Activated CD4-positive, alpha-beta memory T cell treated with anti-CD3 and anti-CD28 coated beads for 36 hours (primary cell): ENCODE measurements at regions of chr16 and their contacts with region 1.

Region 1: DNA sequence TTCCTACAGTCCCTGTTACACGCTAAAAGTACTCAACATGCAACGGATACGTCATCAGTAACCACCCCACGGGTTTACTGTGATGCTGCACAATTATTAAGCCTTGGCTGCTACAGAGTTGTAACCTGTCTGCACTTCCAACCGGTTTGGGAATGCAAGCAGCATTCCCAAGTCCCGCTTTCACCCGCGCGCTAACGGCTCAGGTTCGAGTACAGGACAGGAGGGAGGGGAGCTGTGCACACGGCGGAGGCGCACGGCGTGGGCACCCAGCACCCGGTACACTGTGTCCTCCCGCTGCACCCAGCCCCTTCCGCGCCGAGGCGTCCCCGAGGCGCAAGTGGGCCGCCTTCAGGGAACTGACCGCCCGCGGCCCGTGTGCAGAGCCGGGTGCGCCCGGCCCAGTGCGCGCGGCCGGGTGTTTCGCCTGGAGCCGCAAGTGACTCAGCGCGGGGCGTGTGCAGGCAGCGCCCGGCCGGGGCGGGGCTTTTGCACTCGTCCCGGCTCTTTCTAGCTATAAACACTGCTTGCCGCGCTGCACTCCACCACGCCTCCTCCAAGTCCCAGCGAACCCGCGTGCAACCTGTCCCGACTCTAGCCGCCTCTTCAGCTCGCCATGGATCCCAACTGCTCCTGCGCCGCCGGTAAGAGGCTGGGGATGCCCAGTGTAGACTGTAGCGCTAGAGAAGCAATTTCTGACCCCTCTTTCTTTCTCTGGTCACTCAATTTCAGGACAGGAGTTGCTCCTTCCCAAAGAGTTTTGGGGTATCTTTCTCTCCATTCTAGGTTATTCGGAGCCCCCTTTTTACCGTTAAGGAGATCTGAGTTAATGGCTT is at the start of gene MT2A:
- DNase-seq: peak; percentile 95
- H3K4me3 Mint-ChIP-seq: peak within 1 kb of the TSS; percentile 81
- H3K27ac Mint-ChIP-seq: peak within 1 kb of the TSS; percentile 79
- H3K4me1 Mint-ChIP-seq: peaks cover 57% of the 10 kb centered on the region
- H3K27me3 Mint-ChIP-seq: no peaks in the 10 kb centered on the region
- total RNA-seq, gene MT2A: 102 to 105 TPM

Region 2: DNA sequence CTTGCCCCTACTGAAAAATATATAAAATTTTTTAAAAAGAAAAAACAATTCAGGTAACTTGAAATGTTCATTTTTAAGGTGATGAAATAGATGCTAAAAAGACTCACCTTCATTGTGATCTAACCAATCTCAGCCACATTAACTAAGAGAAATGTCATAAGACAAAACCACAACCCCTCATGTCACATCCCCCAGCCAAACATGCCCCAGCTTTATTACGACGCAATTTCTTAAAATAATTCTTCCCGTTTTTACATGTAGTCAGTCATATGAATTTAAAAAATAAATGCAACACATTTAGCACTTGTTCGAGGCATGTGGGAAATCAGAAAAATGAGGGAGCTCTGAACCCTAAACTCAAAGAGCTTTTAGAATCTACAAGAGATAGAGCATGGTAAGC is 192.4 kb before region 1 on chr16:
- CTCF ChIA-PET with region 1: no interaction called
- POLR2A ChIA-PET with region 1: no interaction called
- intact Hi-C with region 1: no loop called
- DNase-seq: no peak
- H3K4me3 Mint-ChIP-seq: no peak overlapping the region
- H3K27ac Mint-ChIP-seq: no peak overlapping the region
- H3K4me1 Mint-ChIP-seq: peaks cover 19% of the 10 kb centered on the region
- H3K27me3 Mint-ChIP-seq: no peaks in the 10 kb centered on the region

Region 3: GRCh38 chr16:56450986-56451752 is 157.1 kb before region 1 on chr16 and contains the starts of genes NUDT21 and OGFOD1:
- CTCF ChIA-PET with region 1: interaction called, 3 read pairs
- POLR2A ChIA-PET with region 1: interaction called, 3 read pairs
- intact Hi-C with region 1: loop called (anchors 5 kb)
- DNase-seq: peak; percentile 95
- H3K4me3 Mint-ChIP-seq: peak within 1 kb of the TSS; percentile 95
- H3K27ac Mint-ChIP-seq: peak within 1 kb of the TSS; percentile 89
- H3K4me1 Mint-ChIP-seq: peaks cover 56% of the 10 kb centered on the region
- H3K27me3 Mint-ChIP-seq: no peaks in the 10 kb centered on the region
- total RNA-seq, gene NUDT21: 352 to 361 TPM
- total RNA-seq, gene OGFOD1: 63.0 to 66.4 TPM

Region 4: GRCh38 chr16:56625140-56625942 is 17.1 kb after region 1 on chr16 and contains the start of gene MT1E:
- CTCF ChIA-PET with region 1: interaction called, 5 read pairs
- POLR2A ChIA-PET with region 1: interaction called, 6 read pairs
- intact Hi-C with region 1: loop called (anchors 1 kb)
- DNase-seq: peak; percentile 62
- H3K4me3 Mint-ChIP-seq: peak within 1 kb of the TSS; percentile 78
- H3K27ac Mint-ChIP-seq: no peak within 1 kb of the TSS
- H3K4me1 Mint-ChIP-seq: peaks cover 12% of the 10 kb centered on the region
- H3K27me3 Mint-ChIP-seq: peaks cover 21% of the 10 kb centered on the region
- total RNA-seq, gene MT1E: 4.4 to 4.8 TPM

Region 5: DNA sequence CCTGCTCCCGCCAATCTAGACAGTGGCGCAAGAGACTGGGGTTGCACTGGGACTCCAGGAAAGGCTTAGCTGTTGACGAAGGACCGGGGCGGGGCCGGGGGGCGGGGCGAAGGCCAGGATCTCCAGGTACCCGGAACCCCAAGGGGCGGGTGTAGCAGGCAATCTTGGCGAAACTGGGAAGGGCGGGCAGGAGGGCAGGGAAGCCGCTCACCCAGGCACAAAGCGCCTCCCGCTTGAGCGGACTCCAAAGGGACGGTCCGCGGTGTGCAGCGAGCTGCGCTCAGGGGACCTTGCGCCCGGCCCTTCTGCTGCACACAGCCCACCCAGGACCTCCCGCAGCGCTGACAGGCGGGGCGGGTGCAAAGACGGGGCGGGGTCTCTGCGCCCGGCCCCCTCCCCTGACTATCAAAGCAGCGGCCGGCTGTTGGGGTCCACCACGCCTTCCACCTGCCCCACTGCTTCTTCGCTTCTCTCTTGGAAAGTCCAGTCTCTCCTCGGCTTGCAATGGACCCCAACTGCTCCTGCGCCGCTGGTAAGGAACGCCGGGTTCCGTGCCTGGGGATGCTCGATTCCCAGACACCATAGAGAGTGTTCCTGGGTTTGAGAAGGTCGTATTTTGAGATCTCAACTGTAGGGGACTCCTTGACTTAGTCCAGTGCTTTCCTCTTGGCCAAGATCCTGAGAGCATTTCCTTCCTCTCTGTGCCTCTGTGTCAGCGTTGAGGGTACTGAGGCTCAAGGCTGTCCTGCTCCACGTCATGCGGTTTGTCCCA is 49.5 kb after region 1 on chr16 and contains the start of gene MT1F:
- CTCF ChIA-PET with region 1: interaction called, 3 read pairs
- POLR2A ChIA-PET with region 1: interaction called, 3 read pairs
- intact Hi-C with region 1: loop called (anchors 1 kb)
- DNase-seq: peak; percentile 84
- H3K4me3 Mint-ChIP-seq: peak within 1 kb of the TSS; percentile 94
- H3K27ac Mint-ChIP-seq: peak within 1 kb of the TSS; percentile 69
- H3K4me1 Mint-ChIP-seq: peaks cover 14% of the 10 kb centered on the region
- H3K27me3 Mint-ChIP-seq: peaks cover 4% of the 10 kb centered on the region
- total RNA-seq, gene MT1F: 8.5 to 9.2 TPM

Region 6: DNA sequence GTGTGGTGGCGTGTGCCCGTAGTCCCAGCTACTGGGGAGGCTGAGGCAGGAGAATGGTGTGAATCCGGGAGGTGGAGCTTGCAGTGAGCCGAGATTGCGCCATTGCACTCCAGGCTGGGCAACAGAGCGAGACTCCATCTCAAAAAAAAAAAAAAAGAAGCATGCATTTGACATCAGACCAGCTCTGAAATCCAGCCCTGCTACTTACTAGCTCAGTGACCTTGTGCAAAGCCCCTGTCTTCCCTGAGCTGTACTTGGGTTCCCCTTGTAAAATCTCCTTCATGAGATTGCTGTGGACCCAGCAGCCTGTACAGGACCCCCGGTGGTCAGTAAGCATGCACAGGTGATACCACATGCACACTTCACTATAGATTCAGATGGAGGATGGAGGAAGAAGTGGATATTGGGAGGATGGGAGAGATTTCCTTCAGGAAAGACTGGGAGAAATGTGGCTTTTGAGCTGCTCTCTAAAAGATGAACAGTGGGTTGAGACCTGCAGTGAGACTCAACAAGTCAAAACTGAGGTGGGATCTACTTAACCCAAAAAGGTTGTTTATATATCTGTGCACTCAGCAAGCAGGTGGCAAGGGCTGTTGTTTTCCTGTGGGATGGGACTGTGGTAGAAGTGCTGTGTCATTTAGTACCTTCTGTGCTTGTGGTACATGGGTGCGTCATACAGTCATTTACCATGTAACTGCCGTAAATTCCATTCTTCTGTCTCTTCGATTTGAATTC is 330.3 kb after region 1 on chr16:
- CTCF ChIA-PET with region 1: no interaction called
- POLR2A ChIA-PET with region 1: no interaction called
- intact Hi-C with region 1: loop called (anchors 2 kb)
- DNase-seq: peak; percentile 83
- H3K4me3 Mint-ChIP-seq: peak overlapping the region; percentile 77
- H3K27ac Mint-ChIP-seq: peak overlapping the region; percentile 94
- H3K4me1 Mint-ChIP-seq: peaks cover 83% of the 10 kb centered on the region
- H3K27me3 Mint-ChIP-seq: no peaks in the 10 kb centered on the region